Naive thymus-derived CD4-positive, alpha-beta T cell (primary cell): ENCODE measurements at regions of chr3 and their contacts with region 1.

Region 1: DNA sequence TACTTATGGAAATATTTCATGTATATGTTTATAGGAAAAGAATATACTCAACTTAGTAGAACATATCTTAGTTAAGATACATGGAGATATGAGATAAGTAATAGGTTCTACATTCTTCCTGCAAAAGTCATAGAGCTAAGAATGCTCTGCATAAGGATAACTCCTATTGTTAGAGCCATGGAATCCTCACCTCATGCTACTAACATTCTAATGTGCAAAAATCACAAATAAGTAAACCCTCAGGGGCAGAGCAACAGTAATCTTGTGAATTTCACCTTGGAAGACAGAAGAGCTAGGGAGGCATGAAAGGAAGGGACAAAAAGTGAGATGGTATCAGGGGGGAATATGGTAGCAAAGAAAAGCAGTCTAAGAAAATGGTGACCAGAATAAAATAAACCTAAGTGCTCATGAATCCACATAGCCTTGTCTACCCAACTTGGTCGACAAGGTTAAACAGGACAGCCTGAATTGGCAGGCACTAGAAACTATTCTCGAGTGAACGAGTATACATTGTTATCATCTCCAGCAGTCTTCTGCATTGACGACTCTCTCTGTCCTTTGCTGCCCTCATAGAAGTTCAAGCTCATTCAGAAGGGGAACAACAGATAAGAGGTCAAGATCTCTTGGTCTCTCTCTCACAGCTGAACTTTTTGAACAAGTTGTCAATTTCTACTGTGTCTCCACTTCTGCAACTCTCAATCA is 52.8 kb downstream of the XRN1 start:
- DNase-seq: no peak
- ATAC-seq: no peak
- H3K4me3 ChIP-seq: no peak overlapping the region
- H3K4me3 Mint-ChIP-seq: no peak overlapping the region
- H3K27ac ChIP-seq: no peak overlapping the region
- H3K27ac Mint-ChIP-seq: no peak overlapping the region
- H3K4me1 ChIP-seq: no peaks in the 10 kb centered on the region
- H3K4me1 Mint-ChIP-seq: peaks cover 0 to 3% (median 0%) of the 10 kb centered on the region in 7 donors
- H3K27me3 ChIP-seq: no peaks in the 10 kb centered on the region
- H3K27me3 Mint-ChIP-seq: no peaks in the 10 kb centered on the region

Region 2: DNA sequence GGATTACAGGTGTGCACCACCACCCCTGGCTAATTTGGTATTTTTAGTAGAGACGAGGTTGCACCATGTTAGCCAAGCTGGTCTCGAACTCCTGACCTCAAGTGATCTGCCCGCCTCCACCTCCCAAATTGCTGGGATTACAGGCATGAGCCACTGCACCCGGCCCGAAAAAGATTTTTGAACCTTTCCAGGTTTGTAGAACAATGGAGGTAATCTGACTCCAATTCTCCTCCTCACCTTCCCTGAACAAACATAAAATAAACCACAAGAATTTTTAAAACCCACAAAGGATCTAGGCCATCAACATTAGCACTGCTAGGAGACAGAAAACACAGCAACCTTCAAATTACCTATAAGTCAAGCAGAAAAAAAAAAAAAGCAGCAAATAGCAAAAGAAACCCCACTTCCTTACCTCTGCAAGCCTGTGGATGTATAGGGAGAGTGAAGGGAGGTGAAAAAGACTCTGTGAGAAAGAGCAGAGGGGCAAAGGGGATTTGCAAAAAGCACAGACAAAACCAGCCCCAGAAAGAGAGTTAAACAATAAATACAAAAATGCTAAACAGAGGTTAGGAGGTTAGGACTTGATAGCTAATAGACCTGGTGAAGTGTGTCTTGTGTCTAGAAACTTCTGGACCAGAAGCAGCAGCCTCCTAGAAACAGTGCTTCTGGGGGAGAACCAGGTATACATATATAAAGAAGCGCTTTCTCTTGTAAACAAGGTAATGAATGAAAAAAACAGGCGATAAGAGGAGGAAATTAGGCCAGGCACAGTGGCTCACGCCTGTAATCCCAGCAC is 277.8 kb before region 1 on chr3:
- CTCF ChIA-PET with region 1: no interaction called
- POLR2A ChIA-PET with region 1: no interaction called
- intact Hi-C with region 1: no loop called
- DNase-seq: no peak
- ATAC-seq: no peak
- H3K4me3 ChIP-seq: no peak overlapping the region
- H3K4me3 Mint-ChIP-seq: no peak overlapping the region
- H3K27ac ChIP-seq: no peak overlapping the region
- H3K27ac Mint-ChIP-seq: peak overlapping the region in 2 of 9 donors; percentile 16 to 51
- H3K4me1 ChIP-seq: no peaks in the 10 kb centered on the region
- H3K4me1 Mint-ChIP-seq: peaks cover 2 to 25% (median 15%) of the 10 kb centered on the region in 7 donors
- H3K27me3 ChIP-seq: no peaks in the 10 kb centered on the region
- H3K27me3 Mint-ChIP-seq: no peaks in the 10 kb centered on the region

Region 3: GRCh38 chr3:142363936-142364467 is 31.1 kb before region 1 on chr3:
- CTCF ChIA-PET with region 1: no interaction called
- POLR2A ChIA-PET with region 1: no interaction called
- intact Hi-C with region 1: loop called in 1 of 2 experiments (anchors 5 kb)
- DNase-seq: no peak
- ATAC-seq: no peak
- H3K4me3 ChIP-seq: no peak overlapping the region
- H3K4me3 Mint-ChIP-seq: no peak overlapping the region
- H3K27ac ChIP-seq: no peak overlapping the region
- H3K27ac Mint-ChIP-seq: peak overlapping the region in 3 of 9 donors; percentile 13 to 47 (median 31)
- H3K4me1 ChIP-seq: no peaks in the 10 kb centered on the region
- H3K4me1 Mint-ChIP-seq: peaks cover 0 to 5% (median 1%) of the 10 kb centered on the region in 7 donors
- H3K27me3 ChIP-seq: no peaks in the 10 kb centered on the region
- H3K27me3 Mint-ChIP-seq: no peaks in the 10 kb centered on the region